Panc1 (cell line): ENCODE measurements at regions of chr16 and their contacts with region 1.

Region 1: GRCh38 chr16:4288148-4288921 is 15.5 kb upstream of the TFAP4 start:
- DNase-seq: no peak
- ATAC-seq: peak; percentile 82
- H3K4me3 ChIP-seq: peak overlapping the region in 1 of 2 experiments; percentile 30; a peak in 2 of 4 replicates
- H3K27ac ChIP-seq: peak overlapping the region; percentile 25
- H3K4me1 ChIP-seq: peaks cover 34% of the 10 kb centered on the region
- H3K27me3 ChIP-seq: no peaks in the 10 kb centered on the region
- CTCF ChIP-seq: peak; percentile 99

Region 2: DNA sequence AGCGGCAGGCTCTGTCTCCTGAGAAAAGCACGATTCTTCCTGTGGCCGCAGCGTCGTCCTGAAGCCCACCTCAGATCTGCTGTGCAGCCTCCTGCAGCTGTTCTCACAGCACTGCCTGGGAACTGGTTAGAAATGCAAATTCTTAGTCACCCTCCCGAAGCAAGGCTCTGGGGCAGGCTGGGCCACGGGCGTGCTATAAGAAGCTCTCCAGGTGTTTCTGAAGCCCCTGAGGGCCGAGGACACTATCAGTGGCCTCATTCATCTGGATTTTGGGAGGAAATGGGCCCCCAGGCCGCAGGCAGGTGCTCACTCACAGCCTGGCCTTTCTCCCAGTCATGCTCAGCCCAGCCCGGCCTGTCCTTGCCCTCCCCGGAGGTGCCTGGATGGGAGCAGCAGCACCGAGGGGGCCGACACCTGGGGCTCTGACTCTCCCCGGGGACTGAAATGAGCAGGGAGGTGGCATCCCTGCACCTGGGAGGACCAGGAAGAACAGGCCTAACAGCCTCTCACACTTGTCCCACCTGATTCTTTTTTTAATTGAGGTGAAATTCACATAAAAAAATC is 700.7 kb before region 1 on chr16:
- CTCF ChIA-PET with region 1: no interaction called
- POLR2A ChIA-PET with region 1: no interaction called
- in situ Hi-C with region 1: no loop called
- intact Hi-C with region 1: no loop called
- DNase-seq: no peak
- ATAC-seq: no peak
- H3K4me3 ChIP-seq: no peak overlapping the region
- H3K27ac ChIP-seq: no peak overlapping the region
- H3K4me1 ChIP-seq: no peaks in the 10 kb centered on the region
- H3K27me3 ChIP-seq: no peaks in the 10 kb centered on the region
- CTCF ChIP-seq: no peak

Region 3: GRCh38 chr16:4330277-4330874 is 42.0 kb after region 1 on chr16:
- CTCF ChIA-PET with region 1: interaction called, 11 read pairs
- POLR2A ChIA-PET with region 1: no interaction called
- in situ Hi-C with region 1: no loop called
- intact Hi-C with region 1: loop called (anchors 1 kb)
- DNase-seq: no peak
- ATAC-seq: peak; percentile 83
- H3K4me3 ChIP-seq: no peak overlapping the region
- H3K27ac ChIP-seq: peak overlapping the region; percentile 79
- H3K4me1 ChIP-seq: peaks cover 49% of the 10 kb centered on the region
- H3K27me3 ChIP-seq: no peaks in the 10 kb centered on the region
- CTCF ChIP-seq: peak; percentile 98

Region 4: DNA sequence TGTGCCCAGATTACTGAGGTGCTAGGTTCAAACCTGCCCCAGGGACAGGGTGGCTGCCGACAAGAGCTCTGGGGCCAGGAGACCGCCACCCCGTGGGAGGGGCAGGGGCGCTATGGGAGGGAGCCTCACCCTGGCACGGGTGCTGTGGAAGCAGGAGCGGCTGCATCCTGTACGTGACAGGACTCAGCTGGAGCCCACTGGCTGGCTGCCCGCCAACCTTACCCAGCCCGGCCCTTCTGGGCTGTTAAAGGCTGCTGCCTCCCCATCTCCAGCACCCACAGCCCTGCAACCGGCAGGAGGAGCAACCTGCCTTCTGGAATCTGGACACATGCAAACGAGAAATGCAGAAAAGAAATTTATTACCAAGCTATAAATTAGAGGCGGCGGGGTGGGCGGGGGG is 51.6 kb after region 1 on chr16:
- CTCF ChIA-PET with region 1: interaction called, 12 read pairs
- POLR2A ChIA-PET with region 1: no interaction called
- in situ Hi-C with region 1: no loop called
- intact Hi-C with region 1: no loop called
- DNase-seq: no peak
- ATAC-seq: peak; percentile 5; the same call in 1 of the 2 replicates
- H3K4me3 ChIP-seq: no peak overlapping the region
- H3K27ac ChIP-seq: peak overlapping the region; percentile 80
- H3K4me1 ChIP-seq: peaks cover 59% of the 10 kb centered on the region
- H3K27me3 ChIP-seq: no peaks in the 10 kb centered on the region
- CTCF ChIP-seq: no peak

Region 5: DNA sequence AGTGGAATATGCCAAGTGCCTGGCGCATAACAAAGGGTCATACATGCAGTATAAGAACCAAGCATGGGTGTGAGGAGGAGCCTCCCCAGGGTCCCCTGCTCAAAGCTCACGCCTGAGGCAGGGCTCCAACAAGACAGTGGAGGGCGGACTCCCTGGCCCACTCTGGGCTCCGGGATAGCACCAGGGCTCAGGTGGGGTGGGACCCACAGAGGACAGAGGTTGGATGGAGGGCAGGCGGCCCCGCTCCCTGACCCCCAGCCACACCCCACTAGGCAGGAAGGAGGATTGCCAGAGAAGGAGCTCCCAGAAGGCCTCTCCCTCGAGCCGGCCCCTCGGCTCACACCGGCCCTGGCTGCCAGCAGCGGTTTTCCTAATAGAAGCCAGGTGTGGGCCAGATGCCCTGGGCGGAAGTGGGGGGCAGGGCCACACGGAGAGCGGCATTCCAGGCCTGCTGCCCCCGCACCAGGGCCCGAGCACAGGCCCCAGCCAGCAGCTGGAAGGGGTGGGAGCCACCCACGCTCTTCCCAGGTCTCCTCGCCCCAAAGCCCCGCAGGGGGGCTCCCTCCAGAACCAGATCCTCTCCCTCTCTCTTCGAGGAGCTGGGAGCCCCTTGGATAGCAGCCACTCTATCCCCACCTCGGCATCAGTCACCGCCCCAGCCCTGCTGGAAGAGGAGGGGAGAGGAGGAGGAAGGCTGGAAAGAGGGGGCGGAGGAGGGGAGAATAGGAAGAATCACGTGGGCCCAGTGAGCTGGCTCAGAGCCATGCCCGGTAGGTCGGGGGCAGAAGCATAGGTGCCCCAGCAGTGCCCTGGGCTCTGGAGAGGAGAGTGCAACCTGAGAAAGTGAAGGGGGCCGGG is 104.3 kb after region 1 on chr16:
- CTCF ChIA-PET with region 1: no interaction called
- POLR2A ChIA-PET with region 1: no interaction called
- in situ Hi-C with region 1: no loop called
- intact Hi-C with region 1: no loop called
- DNase-seq: no peak
- ATAC-seq: peak; percentile 6; the same call in 1 of the 2 replicates
- H3K4me3 ChIP-seq: no peak overlapping the region
- H3K27ac ChIP-seq: no peak overlapping the region
- H3K4me1 ChIP-seq: peaks cover 19% of the 10 kb centered on the region
- H3K27me3 ChIP-seq: no peaks in the 10 kb centered on the region
- CTCF ChIP-seq: no peak